ENCODE measurements at regions of chr3 and their contacts with region 1.

Region 1: DNA sequence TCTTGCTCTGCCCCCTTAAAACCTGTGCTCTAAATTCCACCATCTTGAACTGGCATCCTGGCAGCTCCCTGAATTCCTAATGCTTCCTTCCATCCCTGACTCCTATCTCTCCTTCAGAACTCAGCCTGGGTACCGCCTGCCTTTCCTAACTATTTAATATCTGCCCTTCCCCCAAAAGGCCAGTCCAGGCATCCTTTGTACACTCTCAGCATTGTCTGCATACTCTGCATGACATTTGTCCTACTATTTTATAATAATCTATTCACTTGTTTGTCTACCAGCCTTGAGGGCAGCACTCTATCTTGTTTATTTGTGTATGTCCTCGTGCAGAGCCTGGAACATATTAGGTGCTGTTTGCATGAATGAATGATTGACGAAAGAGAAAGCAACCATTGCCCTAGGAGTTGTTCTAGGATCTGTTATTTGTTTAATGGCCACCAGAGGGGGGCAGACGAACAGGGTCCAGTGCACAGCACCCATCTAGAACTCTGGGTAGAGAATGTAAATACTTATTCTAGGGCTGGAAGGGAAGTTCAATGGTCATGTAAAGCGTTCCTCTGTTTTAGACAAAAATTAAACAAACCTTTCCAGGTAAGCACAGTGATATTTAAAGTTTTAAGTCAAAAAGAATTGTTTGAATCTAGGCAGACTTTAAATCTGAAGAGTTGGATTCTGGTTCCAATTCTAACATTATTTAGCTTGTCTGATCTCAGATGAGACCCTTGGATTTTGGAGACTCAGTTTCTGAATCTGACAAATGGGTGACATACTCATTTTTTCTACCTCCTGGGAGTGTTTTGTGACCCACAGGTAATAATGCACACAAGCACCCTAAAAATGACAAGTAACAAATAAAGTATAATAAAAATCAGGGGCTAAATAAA is 125.8 kb upstream of the GALNT15 start:
- DNase-seq: peak; percentile 66 to 86 (median 85)
- H3K4me3 ChIP-seq: peak overlapping the region in 3 of 7 experiments; percentile 43 to 58 (median 46)
- H3K27ac ChIP-seq: no peak overlapping the region
- H3K4me1 ChIP-seq: peaks cover 0 to 14% (median 10%) of the 10 kb centered on the region in 4 experiments
- H3K27me3 ChIP-seq: no peaks in the 10 kb centered on the region

Region 2: DNA sequence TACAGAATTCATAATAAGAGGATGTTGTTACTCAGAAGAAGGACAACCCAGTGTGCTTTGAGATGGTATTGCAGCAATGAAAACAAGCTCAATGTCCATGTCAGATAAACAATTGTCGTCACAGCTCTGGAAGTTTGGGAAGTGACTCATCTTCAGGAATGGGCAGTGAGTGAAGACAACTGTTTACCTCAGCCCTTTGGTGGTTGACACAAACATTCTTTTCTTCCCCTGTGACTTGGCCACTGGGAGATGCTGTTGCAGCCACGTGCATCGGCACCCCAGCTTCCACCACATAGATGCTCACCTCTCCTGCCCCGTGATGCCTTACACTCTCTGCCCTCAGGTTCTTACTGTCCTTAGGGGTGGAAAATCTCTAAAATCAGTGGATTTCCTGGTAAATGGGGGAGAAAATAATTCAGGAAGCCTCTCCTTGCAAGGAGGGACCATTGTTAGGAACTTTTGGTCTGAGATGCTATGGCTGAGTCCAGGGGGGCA is 11.7 kb after region 1 on chr3:
- CTCF ChIA-PET with region 1: interaction called, 13 read pairs
- POLR2A ChIA-PET with region 1: no interaction called
- DNase-seq: no peak
- H3K4me3 ChIP-seq: no peak overlapping the region
- H3K27ac ChIP-seq: no peak overlapping the region
- H3K4me1 ChIP-seq: peaks cover 2 to 19% (median 9%) of the 10 kb centered on the region in 4 experiments
- H3K27me3 ChIP-seq: no peaks in the 10 kb centered on the region

Region 3: DNA sequence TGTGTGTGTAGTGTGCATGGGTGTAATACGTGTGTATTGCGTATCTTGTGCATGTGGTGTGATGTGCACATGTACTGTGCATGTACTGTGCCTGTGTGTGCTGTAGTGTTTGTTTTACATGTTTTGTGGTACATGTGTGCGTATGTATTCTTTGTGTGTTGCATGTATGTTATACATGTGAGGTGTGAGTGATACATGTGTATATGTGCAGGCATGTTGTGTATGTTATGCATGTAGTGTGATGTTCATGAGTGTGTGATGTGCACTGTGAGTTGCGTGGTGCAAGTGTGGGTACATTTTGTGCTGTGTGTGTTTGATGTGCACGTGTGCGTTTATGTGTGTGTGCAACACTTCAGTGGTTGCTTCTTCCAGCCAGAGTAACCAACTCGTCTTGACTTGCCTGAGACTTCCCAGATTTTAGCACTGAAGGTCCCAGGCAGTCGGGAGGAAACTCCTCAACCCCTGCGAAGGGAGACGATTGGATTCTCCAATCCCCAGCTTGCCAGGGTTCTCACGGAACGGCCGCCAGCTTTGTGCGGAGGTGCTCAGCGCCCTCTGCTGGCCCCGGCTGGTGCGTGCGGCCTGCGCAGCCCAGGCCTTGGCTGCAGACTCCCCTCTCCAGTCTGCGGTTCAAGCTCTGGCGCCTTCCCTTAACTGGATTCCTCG is 129.4 kb after region 1 on chr3:
- CTCF ChIA-PET with region 1: interaction called, 37 read pairs
- POLR2A ChIA-PET with region 1: no interaction called
- DNase-seq: peak; percentile 71 to 89 (median 85)
- H3K4me3 ChIP-seq: peak overlapping the region in 1 of 7 experiments; percentile 63
- H3K27ac ChIP-seq: no peak overlapping the region
- H3K4me1 ChIP-seq: peaks cover 0 to 4% (median 3%) of the 10 kb centered on the region in 4 experiments
- H3K27me3 ChIP-seq: no peaks in the 10 kb centered on the region

Region 4: GRCh38 chr3:16247276-16248061 is 198.8 kb after region 1 on chr3:
- CTCF ChIA-PET with region 1: interaction called, 21 read pairs
- POLR2A ChIA-PET with region 1: no interaction called
- DNase-seq: peak; percentile 82 to 92 (median 89)
- H3K4me3 ChIP-seq: no peak overlapping the region
- H3K27ac ChIP-seq: no peak overlapping the region
- H3K4me1 ChIP-seq: peaks cover 0 to 5% (median 0%) of the 10 kb centered on the region in 4 experiments
- H3K27me3 ChIP-seq: no peaks in the 10 kb centered on the region

Measured in common myeloid progenitor, CD34-positive (primary cell).